Activated CD4-positive, alpha-beta T cell treated with anti-CD3 and anti-CD28 coated beads for 36 hours (primary cell): ENCODE measurements at regions of chr1 and their contacts with region 1.

Region 1: GRCh38 chr1:110674337-110675059 is at the start of gene KCNA3:
- DNase-seq: peak; percentile 74
- ATAC-seq: peak; percentile 9
- H3K4me3 Mint-ChIP-seq: peak within 1 kb of the TSS; percentile 99
- H3K27ac Mint-ChIP-seq: peak within 1 kb of the TSS; percentile 99
- H3K4me1 Mint-ChIP-seq: peaks cover 34% of the 10 kb centered on the region
- H3K27me3 Mint-ChIP-seq: no peaks in the 10 kb centered on the region
- total RNA-seq, gene KCNA3: 20.0 to 20.5 TPM

Region 2: DNA sequence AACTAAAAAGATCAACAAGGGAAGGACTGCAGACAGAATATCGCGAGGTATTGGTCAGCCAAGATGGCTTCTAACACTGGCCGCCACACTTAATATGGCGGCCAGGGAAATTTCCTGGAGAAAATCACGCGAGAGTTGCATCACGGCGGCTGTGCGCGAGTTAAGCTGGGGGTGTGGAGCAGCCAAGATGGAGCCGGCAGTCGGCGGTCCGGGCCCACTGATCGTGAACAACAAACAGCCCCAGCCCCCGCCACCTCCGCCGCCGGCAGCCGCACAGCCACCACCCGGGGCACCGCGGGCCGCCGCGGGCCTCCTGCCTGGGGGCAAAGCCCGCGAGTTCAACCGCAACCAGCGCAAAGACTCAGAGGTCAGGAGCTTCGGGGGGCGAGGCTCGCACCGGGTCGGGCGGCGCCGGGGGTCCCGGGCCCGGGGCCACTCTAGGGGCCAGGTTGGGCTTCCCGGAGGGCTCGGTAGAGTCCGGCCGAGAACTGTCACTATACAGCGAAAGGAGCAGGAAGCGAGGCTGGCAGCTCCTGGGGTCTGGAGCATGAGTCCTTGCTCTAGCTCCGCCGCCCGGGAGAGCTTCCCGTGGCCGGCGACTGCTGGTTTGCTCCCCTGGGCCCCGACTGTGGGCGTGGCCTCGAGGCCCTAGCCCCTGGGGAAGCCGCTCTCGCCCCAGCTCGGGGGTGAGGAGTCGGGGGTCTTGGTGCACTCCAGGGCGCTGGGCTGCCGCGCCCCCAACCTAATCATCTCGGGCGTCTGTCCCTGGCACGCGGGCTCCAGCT is 639.9 kb before region 1 on chr1 and contains the start of gene STRIP1:
- CTCF ChIA-PET with region 1: no interaction called
- POLR2A ChIA-PET with region 1: no interaction called
- intact Hi-C with region 1: loop called in 1 of 2 experiments (anchors 2 kb)
- DNase-seq: peak; percentile 95
- ATAC-seq: peak; percentile 95
- H3K4me3 Mint-ChIP-seq: peak within 1 kb of the TSS; percentile 94
- H3K27ac Mint-ChIP-seq: peak within 1 kb of the TSS; percentile 95
- H3K4me1 Mint-ChIP-seq: peaks cover 47% of the 10 kb centered on the region
- H3K27me3 Mint-ChIP-seq: no peaks in the 10 kb centered on the region
- total RNA-seq, gene STRIP1: 20.7 to 21.5 TPM

Region 3: GRCh38 chr1:110312188-110313121 is 362.0 kb before region 1 on chr1:
- CTCF ChIA-PET with region 1: no interaction called
- POLR2A ChIA-PET with region 1: no interaction called
- intact Hi-C with region 1: no loop called
- DNase-seq: peak; percentile 86
- ATAC-seq: peak; percentile 98
- H3K4me3 Mint-ChIP-seq: no peak overlapping the region
- H3K27ac Mint-ChIP-seq: no peak overlapping the region
- H3K4me1 Mint-ChIP-seq: no peaks in the 10 kb centered on the region
- H3K27me3 Mint-ChIP-seq: no peaks in the 10 kb centered on the region

Region 4: GRCh38 chr1:110619412-110620249 is 54.9 kb before region 1 on chr1:
- CTCF ChIA-PET with region 1: interaction called, 18 read pairs
- POLR2A ChIA-PET with region 1: interaction called, 4 read pairs
- intact Hi-C with region 1: no loop called
- DNase-seq: peak; percentile 94
- ATAC-seq: peak; percentile 89
- H3K4me3 Mint-ChIP-seq: peak overlapping the region; percentile 72
- H3K27ac Mint-ChIP-seq: peak overlapping the region; percentile 60
- H3K4me1 Mint-ChIP-seq: peaks cover 26% of the 10 kb centered on the region
- H3K27me3 Mint-ChIP-seq: no peaks in the 10 kb centered on the region

Region 5: GRCh38 chr1:110766025-110766647 is 91.6 kb after region 1 on chr1:
- CTCF ChIA-PET with region 1: interaction called, 12 read pairs
- POLR2A ChIA-PET with region 1: no interaction called
- intact Hi-C with region 1: loop called (anchors 2 kb)
- DNase-seq: peak; percentile 72
- ATAC-seq: peak; percentile 70
- H3K4me3 Mint-ChIP-seq: peak overlapping the region; percentile 5
- H3K27ac Mint-ChIP-seq: no peak overlapping the region
- H3K4me1 Mint-ChIP-seq: peaks cover 5% of the 10 kb centered on the region
- H3K27me3 Mint-ChIP-seq: peaks cover 6% of the 10 kb centered on the region

Region 6: DNA sequence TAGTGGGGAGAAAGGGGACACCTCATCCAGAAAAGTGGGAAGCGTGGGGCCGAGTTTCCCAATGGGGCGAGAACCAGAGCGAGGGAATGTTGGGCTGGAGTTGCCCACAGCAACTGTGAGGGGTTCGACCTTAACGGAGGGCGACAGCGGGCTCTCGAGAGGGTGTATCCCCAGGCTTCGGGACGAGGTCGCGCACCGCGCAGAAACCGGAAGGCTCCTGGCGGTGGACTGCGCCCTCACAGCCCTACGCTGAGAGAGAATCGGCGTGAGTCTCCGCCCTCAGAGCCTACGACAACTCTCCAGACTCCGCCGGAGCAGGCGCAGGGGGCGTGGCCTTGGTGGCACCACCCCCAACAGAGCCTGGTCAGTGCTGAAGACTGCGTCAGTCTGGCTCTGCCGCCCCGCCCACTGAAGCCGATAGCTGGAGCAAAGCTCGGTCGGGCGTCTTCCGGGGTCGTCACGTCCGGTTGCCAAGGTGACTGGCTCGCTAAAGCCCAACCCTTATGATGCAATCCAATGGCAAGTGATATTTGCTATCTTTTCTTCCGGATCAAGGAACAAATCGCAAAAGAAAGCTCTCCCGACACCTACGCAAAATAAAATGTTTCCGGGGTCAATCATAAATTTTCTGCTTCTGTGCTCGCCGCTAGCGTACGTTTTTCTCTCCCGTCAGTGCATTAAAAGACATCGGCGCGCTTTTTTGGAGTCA is 289.3 kb after region 1 on chr1 and contains the start of gene LRIF1:
- CTCF ChIA-PET with region 1: no interaction called
- POLR2A ChIA-PET with region 1: no interaction called
- intact Hi-C with region 1: loop called in 1 of 2 experiments (anchors 2 kb)
- DNase-seq: peak; percentile 100
- ATAC-seq: peak; percentile 99
- H3K4me3 Mint-ChIP-seq: peak within 1 kb of the TSS; percentile 78
- H3K27ac Mint-ChIP-seq: peak within 1 kb of the TSS; percentile 94
- H3K4me1 Mint-ChIP-seq: peaks cover 30% of the 10 kb centered on the region
- H3K27me3 Mint-ChIP-seq: peaks cover 7% of the 10 kb centered on the region
- total RNA-seq, gene LRIF1: 15.1 to 15.4 TPM

Region 7: DNA sequence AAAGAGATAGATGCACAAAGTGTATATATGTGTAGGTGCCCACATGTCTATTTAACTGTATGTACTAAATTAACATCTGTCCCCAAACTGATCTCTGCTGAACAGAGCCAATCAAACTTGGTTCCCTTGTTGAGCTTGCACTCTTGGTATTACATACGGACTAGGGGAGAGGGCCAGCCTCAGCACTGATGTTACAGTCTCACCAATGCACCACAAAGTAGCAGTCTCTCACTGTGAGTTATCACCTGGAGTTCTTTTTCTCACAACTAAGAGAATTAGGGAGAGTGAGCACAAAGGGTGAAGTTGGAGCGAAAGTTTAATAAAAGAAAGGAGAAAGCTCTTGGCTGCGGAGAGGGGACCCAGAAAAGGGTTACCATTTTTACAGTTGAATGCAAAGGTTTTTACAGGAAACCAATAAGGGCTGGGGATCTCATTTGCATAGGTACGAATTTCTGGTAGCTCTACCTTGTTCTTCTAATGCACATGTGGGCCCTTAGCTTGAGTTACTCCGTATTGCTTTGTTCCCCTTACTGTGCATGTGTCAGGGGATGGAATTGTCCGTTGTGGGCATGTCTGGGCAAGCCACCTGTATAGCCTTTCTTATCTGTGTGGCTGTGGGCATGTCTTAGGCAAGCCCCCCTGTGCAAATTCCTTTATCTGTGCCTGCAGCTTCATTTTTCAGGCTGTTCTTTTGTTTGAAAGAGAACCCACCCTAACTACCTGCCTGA is 539.7 kb after region 1 on chr1:
- CTCF ChIA-PET with region 1: no interaction called
- POLR2A ChIA-PET with region 1: interaction called, 4 read pairs
- intact Hi-C with region 1: loop called (anchors 1 to 5 kb)
- DNase-seq: no peak
- ATAC-seq: peak; percentile 18
- H3K4me3 Mint-ChIP-seq: peak overlapping the region; percentile 68
- H3K27ac Mint-ChIP-seq: peak overlapping the region; percentile 97
- H3K4me1 Mint-ChIP-seq: peaks cover 80% of the 10 kb centered on the region
- H3K27me3 Mint-ChIP-seq: no peaks in the 10 kb centered on the region